PC-3 (cell line): ENCODE measurements at regions of chr12 and their contacts with region 1.

Region 1: GRCh38 chr12:47742253-47742825 is 16.3 kb downstream of the RAPGEF3 start:
- DNase-seq: peak; percentile 76
- ATAC-seq: peak; percentile 46
- H3K4me3 ChIP-seq: no peak overlapping the region
- H3K27ac ChIP-seq: no peak overlapping the region
- H3K4me1 ChIP-seq: peaks cover 13% of the 10 kb centered on the region; the same call in 1 of the 2 replicates
- H3K27me3 ChIP-seq: no peaks in the 10 kb centered on the region
- CTCF ChIP-seq: peak; percentile 94

Region 2: DNA sequence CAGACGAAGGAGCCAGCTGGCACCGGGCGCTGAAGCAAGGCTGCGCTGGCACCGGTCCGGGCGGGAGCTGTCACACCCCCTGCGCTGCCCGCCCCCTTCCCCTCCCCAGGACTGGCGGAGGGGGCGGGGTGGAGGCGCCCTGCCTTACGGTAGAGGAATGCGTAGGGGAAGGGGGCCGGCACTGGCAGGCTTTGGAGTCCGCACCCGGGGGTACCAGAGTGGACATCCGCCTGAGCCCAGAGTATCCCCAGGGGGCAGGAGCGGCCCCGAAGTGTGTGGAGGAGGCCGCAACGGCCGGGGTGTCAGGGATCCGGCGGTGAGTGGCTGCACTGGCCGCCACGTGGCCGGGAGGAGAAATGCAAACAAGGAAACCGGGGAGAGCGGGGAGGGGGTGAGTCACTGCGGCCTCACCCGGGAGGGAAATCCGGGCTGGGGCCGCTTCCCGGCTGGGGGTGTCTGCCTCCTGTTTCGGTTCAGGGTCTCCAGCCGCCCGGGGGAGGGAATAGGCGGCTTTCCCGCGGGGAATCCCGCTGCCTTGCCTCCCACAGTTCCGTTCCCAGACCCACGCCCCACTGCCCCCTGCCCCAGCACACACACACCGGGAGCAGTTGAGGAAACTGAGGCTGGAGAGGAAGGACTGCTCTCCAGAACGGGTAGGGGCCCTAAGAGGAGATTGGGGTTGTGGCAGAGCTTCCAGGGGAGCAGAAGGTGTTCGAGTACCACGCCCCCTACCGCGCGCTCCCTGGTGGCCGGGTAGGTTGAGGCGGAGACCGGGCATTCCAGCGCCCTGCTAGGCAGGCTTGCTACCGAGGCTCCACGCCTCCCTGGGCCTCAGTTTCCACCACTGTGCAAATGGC is 16.7 kb after region 1 on chr12 and contains the start of gene RAPGEF3:
- CTCF ChIA-PET with region 1: interaction called, 16 read pairs
- POLR2A ChIA-PET with region 1: interaction called, 3 read pairs
- intact Hi-C with region 1: no loop called
- DNase-seq: peak; percentile 87
- ATAC-seq: peak; percentile 85
- H3K4me3 ChIP-seq: peak within 1 kb of the TSS; percentile 75
- H3K27ac ChIP-seq: peak within 1 kb of the TSS; percentile 68
- H3K4me1 ChIP-seq: peaks cover 42% of the 10 kb centered on the region
- H3K27me3 ChIP-seq: no peaks in the 10 kb centered on the region
- CTCF ChIP-seq: peak; percentile 45
- total RNA-seq, gene RAPGEF3: 6.7 and 9.3 TPM in 2 replicates

Region 3: DNA sequence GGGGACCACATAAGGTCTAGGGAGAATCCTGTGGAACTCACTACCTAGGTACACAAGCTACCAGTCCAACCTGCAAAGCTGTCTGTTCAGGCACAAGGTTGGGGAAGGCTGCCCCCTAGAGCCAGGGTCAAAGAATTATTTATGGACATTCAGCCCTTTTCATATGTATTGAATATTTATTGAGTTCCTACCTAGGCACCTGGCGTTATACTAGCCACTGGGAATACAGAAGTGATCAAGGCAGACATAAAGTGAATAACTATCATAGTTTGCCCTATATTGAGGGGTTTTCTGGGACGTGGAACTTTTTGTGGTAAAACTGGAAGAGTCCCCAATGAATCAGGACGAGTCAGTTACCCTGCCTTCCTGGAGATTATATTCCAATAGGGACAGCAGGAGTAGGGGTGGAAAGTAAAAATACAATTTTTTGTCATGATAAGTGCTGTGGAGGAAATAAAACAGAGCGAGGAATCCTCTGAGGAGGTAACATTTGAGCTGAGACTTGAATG is 24.9 kb after region 1 on chr12:
- CTCF ChIA-PET with region 1: interaction called, 13 read pairs
- POLR2A ChIA-PET with region 1: interaction called, 4 read pairs
- intact Hi-C with region 1: loop called (anchors 1 kb)
- DNase-seq: peak; percentile 64
- ATAC-seq: peak; percentile 24; the same call in 1 of the 2 replicates
- H3K4me3 ChIP-seq: no peak overlapping the region
- H3K27ac ChIP-seq: no peak overlapping the region
- H3K4me1 ChIP-seq: peaks cover 13% of the 10 kb centered on the region
- H3K27me3 ChIP-seq: no peaks in the 10 kb centered on the region
- CTCF ChIP-seq: peak; percentile 78

Region 4: DNA sequence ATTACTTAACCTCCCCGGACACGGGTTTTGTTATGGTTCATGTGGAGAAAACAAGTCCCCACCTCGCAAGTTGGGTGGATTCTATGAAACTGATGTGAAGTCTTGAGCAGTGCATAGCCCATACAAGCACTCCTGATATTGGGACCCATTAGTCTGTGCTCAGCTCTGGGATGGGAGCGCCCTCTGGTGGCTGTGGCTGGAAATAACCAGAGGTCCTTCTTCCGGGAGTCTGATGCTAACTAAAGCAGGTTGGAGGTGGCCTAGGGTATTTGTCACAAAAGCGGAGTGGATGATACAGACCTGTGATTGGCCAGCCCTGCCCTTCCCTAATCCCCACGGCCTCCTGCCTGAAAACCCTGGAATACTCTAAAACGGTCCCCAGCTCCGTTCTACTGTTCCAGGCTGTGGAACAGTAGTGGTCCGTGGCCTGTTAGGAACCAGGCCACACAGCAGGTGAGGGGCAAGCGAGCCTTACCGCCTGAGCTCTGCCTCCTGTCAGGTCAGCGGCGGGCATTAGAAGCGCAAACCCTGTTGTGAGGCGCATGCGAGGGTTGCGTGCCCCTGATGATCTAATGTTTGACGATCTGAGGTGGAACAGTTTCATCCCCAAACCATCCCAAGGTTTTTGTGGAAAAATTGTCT is 37.1 kb after region 1 on chr12:
- CTCF ChIA-PET with region 1: interaction called, 6 read pairs
- POLR2A ChIA-PET with region 1: interaction called, 4 read pairs
- intact Hi-C with region 1: loop called (anchors 1 kb)
- DNase-seq: peak; percentile 94
- ATAC-seq: peak; percentile 81
- H3K4me3 ChIP-seq: no peak overlapping the region
- H3K27ac ChIP-seq: no peak overlapping the region
- H3K4me1 ChIP-seq: peaks cover 23% of the 10 kb centered on the region
- H3K27me3 ChIP-seq: no peaks in the 10 kb centered on the region
- CTCF ChIP-seq: peak; percentile 96